ENCODE measurements at regions of chr3 and their contacts with region 1.

Region 1: GRCh38 chr3:157618075-157618760 is 115.0 kb upstream of the VEPH1 start:
- DNase-seq: no peak
- ATAC-seq: peak in 5 of 8 donors; percentile 42 to 61 (median 45)
- H3K4me3 ChIP-seq: no peak overlapping the region
- H3K27ac ChIP-seq: no peak overlapping the region
- H3K4me1 ChIP-seq: peaks cover 0 to 8% (median 0%) of the 10 kb centered on the region in 9 donors
- H3K27me3 ChIP-seq: peaks cover 0 to 14% (median 4%) of the 10 kb centered on the region in 7 donors
- CTCF ChIP-seq: peak; percentile 38 to 78 (median 71)

Region 2: GRCh38 chr3:157532529-157533297 is 85.5 kb before region 1 on chr3:
- intact Hi-C with region 1: no loop called
- DNase-seq: peak in 1 of 2 donors; percentile 29
- ATAC-seq: peak; percentile 62 to 90 (median 82)
- H3K4me3 ChIP-seq: no peak overlapping the region
- H3K27ac ChIP-seq: peak overlapping the region in 1 of 10 donors; percentile 61
- H3K4me1 ChIP-seq: peaks cover 0 to 16% (median 0%) of the 10 kb centered on the region in 9 donors
- H3K27me3 ChIP-seq: no peaks in the 10 kb centered on the region
- CTCF ChIP-seq: peak; percentile 34 to 76 (median 71)

Region 3: DNA sequence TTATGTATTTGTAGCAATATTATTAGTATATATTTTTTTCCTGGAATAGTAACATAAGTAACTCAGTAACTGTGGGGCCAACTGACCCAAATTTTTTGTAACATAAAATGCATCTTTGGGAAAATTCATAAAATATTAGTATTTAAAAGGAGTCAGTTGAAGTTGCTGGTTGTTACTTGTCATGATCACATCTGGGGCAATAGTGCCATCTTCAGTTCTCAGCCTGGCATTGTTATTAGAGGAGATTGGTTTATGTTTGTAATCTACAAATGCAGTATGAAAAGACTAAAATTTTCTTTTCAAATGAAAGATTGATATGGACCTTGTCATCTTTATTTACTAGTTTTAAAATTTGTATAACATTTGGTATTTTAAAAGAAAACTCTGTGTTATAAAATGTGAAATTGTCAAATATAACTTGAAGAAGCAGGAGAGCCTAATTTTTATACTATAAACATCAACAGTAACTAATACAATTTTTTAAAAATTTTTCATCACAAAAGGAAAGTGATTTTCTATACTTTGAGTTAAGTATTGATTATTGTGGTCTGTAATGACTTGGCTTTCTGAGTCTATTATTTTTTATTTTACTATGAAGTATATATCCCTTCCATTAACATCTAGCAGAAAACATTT is 914.0 kb after region 1 on chr3:
- intact Hi-C with region 1: loop called in 8 of 10 experiments (anchors 2 to 10 kb)
- DNase-seq: no peak
- ATAC-seq: no peak
- H3K4me3 ChIP-seq: no peak overlapping the region
- H3K27ac ChIP-seq: no peak overlapping the region
- H3K4me1 ChIP-seq: no peaks in the 10 kb centered on the region
- H3K27me3 ChIP-seq: no peaks in the 10 kb centered on the region
- CTCF ChIP-seq: peak; percentile 30 to 69 (median 58)

Region 4: GRCh38 chr3:158539414-158540014 is 921.3 kb after region 1 on chr3:
- intact Hi-C with region 1: loop called in 7 of 10 experiments (anchors 5 to 10 kb)
- DNase-seq: peak in 1 of 2 donors; percentile 21
- ATAC-seq: peak in 2 of 8 donors; percentile 37 to 54
- H3K4me3 ChIP-seq: no peak overlapping the region
- H3K27ac ChIP-seq: no peak overlapping the region
- H3K4me1 ChIP-seq: no peaks in the 10 kb centered on the region
- H3K27me3 ChIP-seq: no peaks in the 10 kb centered on the region
- CTCF ChIP-seq: peak; percentile 30 to 73 (median 58)